Tibial artery (tissue), 4 donors: ENCODE measurements at regions of chr19 and their contacts with region 1.

Region 1: DNA sequence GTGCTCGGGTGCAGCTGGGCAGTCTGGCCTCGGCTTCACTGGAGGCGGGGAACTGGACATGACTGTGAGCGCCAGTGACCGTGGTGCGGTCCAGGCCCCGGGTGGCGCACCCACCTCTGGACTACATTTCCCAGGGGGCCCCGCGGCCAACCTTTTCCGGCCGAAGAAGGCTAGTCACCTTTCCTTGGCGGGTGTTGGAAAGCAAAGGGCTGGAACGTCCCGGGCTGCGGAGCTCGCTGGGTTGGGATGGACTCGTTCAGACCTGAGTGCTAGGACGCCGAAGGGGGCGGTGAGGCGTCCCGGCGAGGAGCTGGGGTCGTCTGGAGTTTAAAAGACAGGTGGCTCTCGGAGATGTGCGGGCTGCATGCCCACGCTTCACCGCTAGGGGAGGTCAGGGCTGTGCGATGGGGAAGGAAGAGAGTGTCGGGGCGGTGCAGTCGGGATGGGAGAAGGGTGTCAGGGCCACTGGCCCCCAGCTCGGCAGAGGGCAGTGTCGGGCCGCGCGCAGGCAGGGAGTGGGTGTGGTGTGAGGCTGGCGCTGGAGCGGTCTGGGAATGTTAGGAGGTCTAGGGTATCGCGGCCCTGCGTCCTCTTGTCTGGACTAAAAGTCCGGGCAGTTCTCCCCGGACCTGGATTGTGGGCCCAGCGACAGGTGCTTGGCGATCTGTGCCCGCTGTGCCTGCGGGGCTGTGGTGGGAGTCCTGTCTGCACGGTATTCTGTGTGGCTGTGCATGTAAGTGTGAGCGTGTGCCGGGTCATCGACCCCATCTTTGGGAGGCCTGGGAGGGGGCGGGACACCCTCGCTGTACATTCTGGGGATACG is 57.1 kb downstream of the ZNF568 start:
- DNase-seq: peak; percentile 78 to 91
- H3K4me3 ChIP-seq: peak overlapping the region; percentile 64 to 76
- H3K27ac ChIP-seq: peak overlapping the region; percentile 78 to 84
- H3K4me1 ChIP-seq: peaks cover 0 to 15% (median 10%) of the 10 kb centered on the region in 4 donors
- H3K27me3 ChIP-seq: no peaks in the 10 kb centered on the region
- CTCF ChIP-seq: peak; percentile 84 to 87

Region 2: DNA sequence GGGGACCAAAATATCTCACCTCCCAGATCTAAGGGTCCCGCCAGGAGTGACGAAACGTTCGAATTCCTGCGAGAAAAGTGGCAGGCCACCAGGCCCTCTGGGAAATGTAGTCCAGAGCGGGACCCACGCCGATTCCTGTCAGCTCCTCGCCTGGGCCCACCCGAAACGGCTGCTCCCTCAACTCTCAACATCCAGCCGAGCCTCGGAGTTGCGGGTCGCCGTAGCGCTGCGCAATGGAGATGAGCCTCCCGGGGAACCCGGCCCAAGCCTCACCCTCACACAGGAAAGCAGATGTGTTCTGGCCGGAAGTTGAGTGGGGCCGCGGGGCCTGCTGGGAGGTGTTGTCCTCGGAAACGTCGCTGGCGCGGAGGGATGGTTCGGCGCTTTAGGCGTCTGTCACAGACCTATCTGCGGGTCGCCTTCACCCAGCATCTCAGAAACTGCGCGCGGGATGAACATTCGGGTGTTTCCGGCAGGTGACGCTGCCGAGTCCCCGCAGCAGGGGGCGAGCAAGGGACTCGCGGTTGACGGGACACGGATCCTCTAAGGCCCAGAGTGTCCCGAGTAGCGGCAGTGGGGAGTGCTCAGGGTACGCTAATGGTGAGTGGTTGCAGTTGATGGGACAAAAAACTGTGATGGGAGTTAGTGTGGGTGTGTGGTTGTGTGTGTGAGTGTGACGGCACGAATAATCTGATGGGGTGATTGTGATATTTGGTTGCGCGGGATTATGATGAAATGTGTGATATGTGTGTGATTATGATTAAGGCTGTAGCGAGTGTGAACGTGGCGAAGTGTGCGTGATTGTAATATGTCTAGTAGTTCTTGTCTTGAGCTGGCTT is 57.0 kb before region 1 on chr19 and contains the starts of genes ZNF568 and ZNF829:
- intact Hi-C with region 1: no loop called
- DNase-seq: peak; percentile 92 to 94
- H3K4me3 ChIP-seq: peak within 1 kb of the TSS; percentile 70 to 76
- H3K27ac ChIP-seq: peak within 1 kb of the TSS; percentile 91 to 93
- H3K4me1 ChIP-seq: peaks cover 0 to 17% (median 13%) of the 10 kb centered on the region in 4 donors
- H3K27me3 ChIP-seq: no peaks in the 10 kb centered on the region
- CTCF ChIP-seq: peak; percentile 60 to 64

Region 3: DNA sequence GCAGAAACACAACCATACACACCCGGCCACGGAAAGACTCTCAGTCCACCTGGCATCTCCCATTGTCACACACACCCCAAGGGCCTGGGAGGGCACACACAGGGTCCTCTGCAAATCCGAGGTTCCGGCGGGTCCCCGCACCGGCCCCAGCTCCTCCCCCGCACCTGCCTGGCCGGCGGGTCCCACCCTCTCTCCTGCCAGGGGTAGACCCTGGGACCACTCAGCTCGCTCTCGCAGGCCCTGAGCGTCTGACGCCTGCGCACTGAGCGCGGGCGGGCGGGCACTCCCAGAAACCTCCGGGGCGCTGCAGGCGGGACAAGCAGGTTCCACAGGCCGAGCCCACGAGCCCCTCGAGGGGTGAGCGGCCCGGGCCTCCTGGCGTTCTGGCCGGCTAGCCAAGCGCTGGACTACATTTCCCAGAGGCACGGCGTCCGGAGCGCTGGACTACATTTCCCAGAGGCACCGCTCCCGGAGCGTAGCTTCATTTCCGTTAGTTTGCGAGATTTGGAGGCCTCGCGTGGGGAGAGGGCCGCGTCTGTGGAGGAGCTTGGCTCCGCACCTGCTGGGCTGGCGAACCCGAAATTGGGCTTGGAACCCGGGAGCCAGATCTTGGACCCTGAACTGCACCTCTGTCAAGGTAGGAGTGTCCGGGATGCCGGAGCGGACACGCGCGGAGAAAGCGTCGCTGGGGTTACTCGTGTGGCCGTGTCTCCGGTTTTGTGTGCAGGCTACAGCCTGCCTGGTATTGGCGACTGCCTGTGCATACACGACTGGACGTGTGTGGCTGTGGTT is 104.9 kb after region 1 on chr19 and contains the start of gene ZNF420:
- intact Hi-C with region 1: loop called (anchors 5 kb)
- DNase-seq: peak; percentile 91 to 96
- H3K4me3 ChIP-seq: peak within 1 kb of the TSS; percentile 70 to 86
- H3K27ac ChIP-seq: peak within 1 kb of the TSS; percentile 83 to 89
- H3K4me1 ChIP-seq: peaks cover 0 to 15% (median 8%) of the 10 kb centered on the region in 4 donors
- H3K27me3 ChIP-seq: no peaks in the 10 kb centered on the region
- CTCF ChIP-seq: no peak

Region 4: DNA sequence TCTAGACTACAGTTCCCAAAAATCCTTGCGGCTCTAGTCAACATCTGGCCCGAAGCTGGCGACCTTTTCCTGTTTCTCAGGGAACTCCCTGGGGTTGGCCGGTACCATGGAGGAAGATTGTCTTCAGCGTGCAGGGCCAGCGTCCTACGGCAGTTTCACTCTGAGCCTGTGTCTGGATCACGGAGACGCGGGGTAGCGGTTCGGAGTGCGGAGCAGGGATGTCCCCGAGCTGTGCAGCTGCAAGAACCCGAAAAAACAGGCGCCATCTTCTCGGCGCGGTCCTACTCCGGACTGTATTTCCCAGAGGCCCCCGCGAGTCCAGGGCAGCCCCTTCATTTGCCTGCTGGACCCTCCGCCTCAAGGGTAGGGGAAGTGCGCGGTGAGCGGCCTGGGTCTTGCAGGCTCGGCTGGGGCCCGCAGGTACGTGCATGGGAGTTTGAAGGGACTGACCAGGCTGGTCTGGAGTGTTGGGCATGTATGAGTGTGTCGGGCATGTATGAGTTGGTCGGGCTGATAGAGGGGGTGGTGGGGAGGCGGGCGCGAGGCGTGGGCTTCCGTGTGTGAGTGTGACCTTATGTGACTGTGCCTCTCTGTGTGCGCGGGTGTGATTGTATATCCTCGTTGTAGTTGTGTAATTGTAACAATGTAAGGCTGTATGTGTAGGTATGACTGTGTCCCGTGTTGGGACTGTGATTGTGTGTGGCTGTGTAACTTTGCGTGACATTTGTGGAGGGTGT is 244.8 kb after region 1 on chr19 and contains the start of gene ZNF383:
- intact Hi-C with region 1: loop called (anchors 5 kb)
- DNase-seq: peak; percentile 89 to 91
- H3K4me3 ChIP-seq: peak within 1 kb of the TSS; percentile 77 to 79
- H3K27ac ChIP-seq: peak within 1 kb of the TSS; percentile 78 to 87
- H3K4me1 ChIP-seq: peaks cover 0 to 25% (median 10%) of the 10 kb centered on the region in 4 donors
- H3K27me3 ChIP-seq: no peaks in the 10 kb centered on the region
- CTCF ChIP-seq: no peak